ENCODE measurements at regions of chr1 and their contacts with region 1.

Region 1: DNA sequence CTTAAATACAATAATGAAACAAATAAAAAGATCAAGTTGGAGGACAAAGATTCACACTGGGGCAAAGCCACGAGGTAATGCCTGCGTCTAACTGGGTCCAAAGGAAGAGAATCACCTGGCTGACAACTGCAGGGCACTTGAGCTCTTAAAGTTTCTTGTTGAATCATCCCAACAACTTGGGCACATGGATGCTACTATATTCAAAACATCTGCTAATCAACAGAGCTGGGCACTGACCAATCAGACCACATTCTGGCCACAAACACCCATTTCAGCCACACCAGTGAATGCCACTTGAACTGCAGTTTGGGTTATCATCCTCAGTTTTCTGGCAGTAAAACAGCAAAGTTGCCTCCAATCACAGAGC is 51.0 kb downstream of the ABCA4 start:
- DNase-seq: no peak
- H3K4me3 ChIP-seq: no peak overlapping the region
- H3K27ac ChIP-seq: peak overlapping the region; percentile 53
- H3K4me1 ChIP-seq: peaks cover 29% of the 10 kb centered on the region
- H3K27me3 ChIP-seq: no peaks in the 10 kb centered on the region
- CTCF ChIP-seq: no peak
- POLR2A ChIP-seq: no peak

Region 2: DNA sequence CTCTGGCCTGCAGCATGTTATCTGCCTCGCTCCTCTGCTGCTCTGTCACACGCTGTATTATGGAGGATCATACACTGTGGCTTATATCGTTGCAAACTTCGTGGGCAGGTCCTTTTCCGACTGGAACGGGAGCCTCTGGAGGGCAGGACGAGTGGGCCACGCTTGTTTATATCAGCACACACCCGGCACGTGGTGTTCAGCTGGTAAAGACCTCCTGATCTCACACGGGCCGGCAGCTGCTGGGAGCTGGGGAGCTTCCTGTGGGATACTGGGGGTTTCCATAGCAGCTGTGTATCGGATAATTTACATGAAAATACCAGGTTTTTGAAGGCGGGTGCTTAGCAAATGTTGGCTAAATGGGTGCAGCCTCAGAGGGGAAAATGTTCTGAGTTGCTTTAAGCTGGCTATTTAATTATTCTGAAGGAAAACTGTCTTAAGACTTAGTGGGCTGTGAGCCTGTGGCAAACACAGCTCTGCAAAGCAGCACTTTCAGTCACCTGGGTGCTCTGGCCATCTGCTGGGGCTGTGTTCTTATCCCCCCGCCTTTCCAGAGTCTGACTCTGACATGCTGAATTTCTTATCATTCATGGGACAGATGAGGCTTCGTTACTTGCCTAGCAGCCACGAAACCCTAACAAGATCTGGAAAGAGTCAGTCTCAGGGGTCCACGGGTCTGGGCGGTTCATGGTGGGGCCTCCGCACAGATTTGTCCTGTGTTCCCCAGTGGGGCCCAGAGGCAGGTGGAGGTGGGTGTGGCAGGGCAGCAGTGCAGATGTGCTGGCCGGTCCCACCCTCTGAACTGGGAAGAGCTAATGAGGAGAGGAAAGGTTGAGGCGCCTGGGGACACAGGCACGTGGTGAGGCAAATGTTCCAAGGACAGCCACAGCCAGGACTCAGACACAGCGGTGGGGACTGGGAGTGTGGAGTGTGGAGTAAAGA is 56.9 kb before region 1 on chr1:
- intact Hi-C with region 1: no loop called
- DNase-seq: no peak
- H3K4me3 ChIP-seq: no peak overlapping the region
- H3K27ac ChIP-seq: no peak overlapping the region
- H3K4me1 ChIP-seq: no peaks in the 10 kb centered on the region
- H3K27me3 ChIP-seq: no peaks in the 10 kb centered on the region
- CTCF ChIP-seq: no peak
- POLR2A ChIP-seq: no peak

Region 3: GRCh38 chr1:94118021-94118870 is 48.3 kb after region 1 on chr1:
- intact Hi-C with region 1: loop called (anchors 2 kb)
- DNase-seq: no peak
- H3K4me3 ChIP-seq: no peak overlapping the region
- H3K27ac ChIP-seq: peak overlapping the region; percentile 48
- H3K4me1 ChIP-seq: peaks cover 18% of the 10 kb centered on the region
- H3K27me3 ChIP-seq: no peaks in the 10 kb centered on the region
- CTCF ChIP-seq: no peak
- POLR2A ChIP-seq: no peak